Dorsolateral prefrontal cortex (tissue), 120 donors: ENCODE measurements at regions of chr11 and their contacts with region 1.

Region 1: GRCh38 chr11:64048042-64048854 is 12.5 kb downstream of the FLRT1 start:
- DNase-seq: peak; percentile 66 to 99 (median 96)
- H3K4me3 ChIP-seq: no peak overlapping the region
- H3K27ac ChIP-seq: peak overlapping the region; percentile 70 to 97 (median 90)
- H3K27me3 ChIP-seq: no peaks in the 10 kb centered on the region
- CTCF ChIP-seq: peak in 18 of 56 donors; percentile 12 to 57 (median 24)

Region 2: DNA sequence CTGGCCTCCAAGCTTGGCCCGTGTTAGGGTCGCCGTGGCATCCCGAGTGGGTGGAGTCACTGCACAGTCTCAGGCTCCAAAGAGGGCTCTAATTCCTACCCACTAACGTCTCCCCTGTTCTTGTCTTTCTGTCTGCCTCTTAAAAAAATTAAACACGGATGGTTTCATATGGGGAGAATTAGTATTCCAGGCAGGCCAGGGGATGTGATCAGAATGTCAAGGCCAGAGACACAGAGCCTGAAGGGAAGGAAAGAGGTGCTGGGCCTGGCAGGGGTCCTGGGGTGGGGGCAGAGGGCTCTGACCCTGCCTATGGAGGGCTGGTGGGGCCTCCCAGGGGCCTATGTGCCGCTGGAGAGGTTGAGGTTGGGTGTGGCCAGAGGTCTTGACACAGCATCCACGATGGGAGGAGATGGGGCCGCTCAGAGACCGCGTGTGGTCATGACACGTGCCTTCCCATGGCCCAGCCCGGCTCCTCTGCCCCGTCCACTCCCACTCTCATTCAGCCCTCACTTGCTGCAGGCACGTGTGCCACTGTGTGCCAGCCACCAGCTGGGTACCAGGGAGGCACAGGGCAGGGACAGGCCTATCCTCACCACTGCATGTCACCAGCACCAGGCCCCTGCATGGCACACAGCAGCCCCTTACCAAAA is 44.0 kb after region 1 on chr11:
- intact Hi-C with region 1: loop called in 1 of 2 experiments (anchors 1 kb)
- DNase-seq: peak in 9 of 10 donors; percentile 70 to 90 (median 88)
- H3K4me3 ChIP-seq: no peak overlapping the region
- H3K27ac ChIP-seq: peak overlapping the region in 58 of 59 donors; percentile 66 to 99 (median 92)
- H3K27me3 ChIP-seq: no peaks in the 10 kb centered on the region
- CTCF ChIP-seq: peak in 4 of 56 donors; percentile 6 to 30 (median 16)

Region 3: GRCh38 chr11:64100360-64100759 is 52.1 kb after region 1 on chr11:
- intact Hi-C with region 1: loop called in 1 of 2 experiments (anchors 2 kb)
- DNase-seq: peak in 3 of 10 donors; percentile 50 to 68 (median 54)
- H3K4me3 ChIP-seq: no peak overlapping the region
- H3K27ac ChIP-seq: peak overlapping the region in 58 of 59 donors; percentile 32 to 99 (median 88)
- H3K27me3 ChIP-seq: no peaks in the 10 kb centered on the region
- CTCF ChIP-seq: peak in 48 of 56 donors; percentile 13 to 63 (median 45)